Activated CD8-positive, alpha-beta T cell treated with anti-CD3 and anti-CD28 coated beads, Interleukin-2, amount 10 ng/mL, durations not matched to agents 7 days and 5 days (primary cell): ENCODE measurements at regions of chr17 and their contacts with region 1.

Region 1: GRCh38 chr17:64025732-64026294 is 5.4 kb upstream of the ICAM2 start:
- DNase-seq: peak; percentile 96
- ATAC-seq: peak; percentile 89
- H3K4me3 Mint-ChIP-seq: peak overlapping the region; percentile 63
- H3K27ac Mint-ChIP-seq: peak overlapping the region; percentile 86
- H3K4me1 Mint-ChIP-seq: peaks cover 69% of the 10 kb centered on the region
- H3K27me3 Mint-ChIP-seq: no peaks in the 10 kb centered on the region

Region 2: DNA sequence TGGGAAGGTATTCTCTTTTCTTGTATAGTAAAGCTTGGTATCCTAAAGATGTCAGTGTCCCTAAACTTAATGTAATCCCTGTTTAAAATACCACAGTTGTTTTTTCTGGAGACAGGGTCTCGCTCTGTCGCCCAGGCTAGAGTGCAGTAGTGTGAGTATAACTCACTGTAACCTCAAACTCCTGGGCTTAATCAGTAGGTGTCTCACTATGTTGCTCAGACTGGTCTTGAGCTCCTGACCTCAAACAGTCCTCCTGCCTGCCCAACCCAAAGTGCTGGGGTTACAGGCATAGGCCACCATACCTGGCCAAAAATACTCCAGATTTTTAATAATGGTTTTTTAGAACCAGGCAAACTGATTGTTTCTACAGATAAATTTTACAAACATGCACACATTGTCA is 467.4 kb before region 1 on chr17:
- CTCF ChIA-PET with region 1: no interaction called
- POLR2A ChIA-PET with region 1: no interaction called
- DNase-seq: no peak
- ATAC-seq: no peak
- H3K4me3 Mint-ChIP-seq: no peak overlapping the region
- H3K27ac Mint-ChIP-seq: no peak overlapping the region
- H3K4me1 Mint-ChIP-seq: peaks cover 37% of the 10 kb centered on the region
- H3K27me3 Mint-ChIP-seq: no peaks in the 10 kb centered on the region

Region 3: DNA sequence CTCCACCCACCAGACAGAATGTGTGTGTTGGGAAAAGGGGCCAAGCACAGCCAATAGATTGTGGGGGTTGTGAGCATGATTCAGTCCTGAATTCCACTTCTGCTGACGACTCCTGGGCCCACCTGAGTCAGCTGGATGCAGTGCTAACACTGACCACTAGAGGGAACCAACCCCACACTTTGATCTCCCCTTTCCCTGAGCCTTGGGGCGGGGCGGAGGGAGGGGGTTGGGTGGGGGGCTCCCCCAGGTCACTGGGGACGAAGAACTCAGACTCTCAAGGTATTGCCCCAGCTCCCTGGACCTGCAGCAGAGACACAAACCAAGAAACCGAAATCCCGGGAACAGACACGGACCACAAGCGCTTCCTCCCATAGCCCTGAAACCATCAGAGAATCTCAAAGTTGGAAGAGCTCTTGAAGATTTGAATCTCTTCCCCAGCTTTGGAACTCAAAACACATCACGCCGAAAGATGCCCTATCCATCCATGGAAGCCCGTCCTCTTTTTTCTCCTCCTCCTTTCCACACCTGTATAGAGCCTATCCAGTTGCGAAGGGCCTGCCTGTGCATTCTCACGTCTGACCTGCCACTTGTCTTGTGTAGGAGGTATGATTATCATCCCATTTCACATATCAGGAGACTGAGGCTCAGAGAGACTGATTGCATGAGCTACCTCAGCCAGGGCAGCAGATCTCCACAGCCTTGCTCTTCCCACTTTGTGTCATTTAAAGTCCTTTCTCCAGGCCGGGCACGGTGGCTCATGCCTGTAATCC is 114.0 kb before region 1 on chr17:
- CTCF ChIA-PET with region 1: interaction called, 114 read pairs
- POLR2A ChIA-PET with region 1: no interaction called
- DNase-seq: peak; percentile 74
- ATAC-seq: peak; percentile 72
- H3K4me3 Mint-ChIP-seq: no peak overlapping the region
- H3K27ac Mint-ChIP-seq: no peak overlapping the region
- H3K4me1 Mint-ChIP-seq: no peaks in the 10 kb centered on the region
- H3K27me3 Mint-ChIP-seq: peaks cover 15% of the 10 kb centered on the region

Region 4: DNA sequence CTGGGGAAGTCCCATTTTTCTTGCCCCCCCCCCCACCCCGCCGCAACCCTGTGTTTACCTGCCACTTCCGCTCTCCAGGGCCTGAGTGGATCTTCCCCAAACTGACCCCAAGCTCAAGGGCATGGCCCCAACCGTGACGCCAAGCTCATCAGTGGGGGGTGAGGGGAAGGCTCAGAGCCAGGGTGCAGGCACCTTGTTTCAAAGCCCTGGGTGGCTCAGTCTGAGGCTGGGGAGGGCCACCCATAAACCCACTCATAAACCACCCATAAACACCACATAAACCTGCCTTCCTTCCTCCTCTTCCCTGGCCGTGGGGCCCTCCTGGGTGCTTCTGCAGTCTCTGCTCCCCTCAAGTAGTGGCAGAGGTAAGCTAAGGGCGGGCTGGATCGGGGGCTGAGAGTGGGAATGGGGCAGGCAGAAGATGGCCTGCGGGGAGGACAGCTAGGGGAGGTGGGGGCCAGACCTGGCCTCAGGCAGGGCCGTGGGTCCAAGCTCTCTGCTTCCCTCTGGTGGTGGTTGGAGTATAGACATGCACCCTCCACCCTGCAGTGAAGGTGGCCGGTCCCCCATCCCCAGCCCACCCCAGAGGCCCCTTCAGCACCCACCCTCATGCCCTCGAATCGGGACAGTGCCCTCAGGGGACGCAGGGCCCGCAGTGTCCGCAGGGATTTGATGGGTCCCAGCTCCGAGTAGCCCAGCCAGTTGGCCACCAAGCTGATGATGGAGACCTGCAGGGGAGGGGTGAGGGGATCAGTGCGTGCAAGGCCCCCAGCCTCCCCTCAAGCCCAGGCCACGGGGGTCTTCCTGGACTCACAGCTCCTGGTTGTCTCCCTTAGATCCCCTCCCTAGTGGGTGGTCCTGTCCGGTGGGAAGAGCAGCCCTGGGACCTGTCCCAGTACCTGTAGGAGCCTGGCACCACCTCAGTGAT is 79.1 kb before region 1 on chr17:
- CTCF ChIA-PET with region 1: interaction called, 28 read pairs
- POLR2A ChIA-PET with region 1: interaction called, 7 read pairs
- DNase-seq: peak; percentile 72
- ATAC-seq: peak; percentile 86
- H3K4me3 Mint-ChIP-seq: peak overlapping the region; percentile 36
- H3K27ac Mint-ChIP-seq: peak overlapping the region; percentile 62
- H3K4me1 Mint-ChIP-seq: peaks cover 22% of the 10 kb centered on the region
- H3K27me3 Mint-ChIP-seq: peaks cover 30% of the 10 kb centered on the region

Region 5: GRCh38 chr17:64041912-64042311 is 16.1 kb after region 1 on chr17:
- CTCF ChIA-PET with region 1: interaction called, 44 read pairs
- POLR2A ChIA-PET with region 1: no interaction called
- DNase-seq: no peak
- ATAC-seq: no peak
- H3K4me3 Mint-ChIP-seq: no peak overlapping the region
- H3K27ac Mint-ChIP-seq: no peak overlapping the region
- H3K4me1 Mint-ChIP-seq: peaks cover 11% of the 10 kb centered on the region
- H3K27me3 Mint-ChIP-seq: no peaks in the 10 kb centered on the region

Region 6: GRCh38 chr17:64063766-64064224 is 38.0 kb after region 1 on chr17:
- CTCF ChIA-PET with region 1: interaction called, 37 read pairs
- POLR2A ChIA-PET with region 1: no interaction called
- DNase-seq: peak; percentile 71
- ATAC-seq: peak; percentile 64
- H3K4me3 Mint-ChIP-seq: no peak overlapping the region
- H3K27ac Mint-ChIP-seq: peak overlapping the region; percentile 1
- H3K4me1 Mint-ChIP-seq: peaks cover 71% of the 10 kb centered on the region
- H3K27me3 Mint-ChIP-seq: no peaks in the 10 kb centered on the region

Region 7: GRCh38 chr17:64117981-64118979 is 92.5 kb after region 1 on chr17:
- CTCF ChIA-PET with region 1: interaction called, 12 read pairs
- POLR2A ChIA-PET with region 1: interaction called, 3 read pairs
- DNase-seq: no peak
- ATAC-seq: no peak
- H3K4me3 Mint-ChIP-seq: no peak overlapping the region
- H3K27ac Mint-ChIP-seq: no peak overlapping the region
- H3K4me1 Mint-ChIP-seq: peaks cover 48% of the 10 kb centered on the region
- H3K27me3 Mint-ChIP-seq: no peaks in the 10 kb centered on the region